A549 (cell line): ENCODE measurements at regions of chr5 and their contacts with region 1.

Region 1: DNA sequence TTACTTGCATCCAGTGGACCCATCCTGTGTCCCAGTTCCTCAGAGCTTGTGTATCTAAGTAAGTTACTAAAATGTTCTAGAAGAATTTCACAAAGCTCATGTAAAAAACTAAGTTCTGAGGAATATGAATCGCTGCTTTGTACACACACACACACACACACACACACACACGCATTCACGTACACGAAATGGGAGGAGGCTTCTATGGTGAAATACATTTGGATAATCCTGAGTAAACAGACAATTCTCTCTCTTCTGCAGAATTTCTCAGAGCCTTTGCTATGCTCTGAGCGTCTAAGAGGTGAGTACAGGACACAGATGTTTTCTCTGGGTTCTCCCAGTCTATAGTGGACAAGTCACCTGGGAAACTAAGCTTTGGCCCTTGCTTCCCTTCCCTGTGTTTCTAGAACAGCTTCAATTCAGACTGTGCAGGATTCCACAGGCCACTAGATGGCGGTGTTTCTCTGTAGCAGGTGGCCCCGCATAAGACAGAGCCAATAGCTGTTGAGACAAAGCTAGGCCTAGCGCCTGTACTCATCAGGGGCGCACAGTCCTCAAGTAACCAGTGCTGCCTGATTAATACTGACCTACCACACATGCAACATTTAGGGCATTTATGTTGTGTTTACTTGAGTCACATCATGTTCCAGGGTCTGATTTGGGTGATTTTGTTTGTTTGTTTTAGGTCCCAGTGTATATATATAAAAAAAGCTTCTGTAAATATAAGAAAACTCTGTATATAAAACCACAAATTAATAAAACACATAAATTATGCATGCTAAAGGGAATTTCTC is 114.8 kb downstream of the LIFR start:
- DNase-seq: peak; percentile 82 to 92
- ATAC-seq: peak; percentile 99 to 100
- H3K4me3 ChIP-seq: no peak overlapping the region
- H3K27ac ChIP-seq: 0 out of 6 replicates have a peak overlapping the region, but pooled peaks of 1 of the 2 experiments have one; percentile 43
- H3K4me1 ChIP-seq: peaks cover 3% of the 10 kb centered on the region; the same call in 1 of the 3 replicates
- CTCF ChIP-seq: peak; percentile 97
- EP300 ChIP-seq: no peak
- POLR2A ChIP-seq: no peak
- RAD21 ChIP-seq: peak; percentile 99 to 100

Region 2: GRCh38 chr5:38341056-38341455 is 100.6 kb before region 1 on chr5:
- CTCF ChIA-PET with region 1: no interaction called
- POLR2A ChIA-PET with region 1: no interaction called
- DNase-seq: no peak
- ATAC-seq: no peak
- H3K4me3 ChIP-seq: no peak overlapping the region
- H3K27ac ChIP-seq: no peak overlapping the region
- H3K4me1 ChIP-seq: no peaks in the 10 kb centered on the region
- CTCF ChIP-seq: no peak
- EP300 ChIP-seq: no peak
- POLR2A ChIP-seq: no peak
- RAD21 ChIP-seq: no peak

Region 3: DNA sequence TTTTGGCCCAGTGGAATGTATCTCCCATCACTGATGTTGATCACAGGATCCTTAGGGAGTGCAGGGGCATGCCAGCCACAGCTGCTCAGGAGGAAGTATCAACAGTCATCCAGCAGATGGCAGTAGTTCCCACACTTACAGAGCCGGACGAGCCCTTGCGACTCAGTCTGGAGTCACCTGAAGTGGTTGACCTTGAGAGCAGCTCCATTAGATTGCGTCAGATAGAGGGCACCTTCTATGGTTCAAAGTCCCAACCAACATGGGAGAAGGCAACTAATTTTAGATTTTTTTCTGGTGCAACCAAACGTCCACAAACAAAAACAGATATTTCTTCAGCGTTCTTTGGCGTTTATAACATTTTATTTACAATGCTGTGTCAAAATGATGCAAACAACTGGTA is 58.8 kb before region 1 on chr5:
- CTCF ChIA-PET with region 1: interaction called, 20 read pairs
- POLR2A ChIA-PET with region 1: no interaction called
- DNase-seq: peak; percentile 72 to 76
- ATAC-seq: peak; percentile 96 to 99
- H3K4me3 ChIP-seq: no peak overlapping the region
- H3K27ac ChIP-seq: no peak overlapping the region
- H3K4me1 ChIP-seq: no peaks in the 10 kb centered on the region
- CTCF ChIP-seq: peak; percentile 73
- EP300 ChIP-seq: no peak
- POLR2A ChIP-seq: no peak
- RAD21 ChIP-seq: peak; percentile 73 to 77

Region 4: GRCh38 chr5:38463634-38464521 is 22.2 kb after region 1 on chr5:
- CTCF ChIA-PET with region 1: interaction called, 74 read pairs
- POLR2A ChIA-PET with region 1: no interaction called
- DNase-seq: peak; percentile 57 to 82
- ATAC-seq: peak; percentile 79 to 87
- H3K4me3 ChIP-seq: no peak overlapping the region
- H3K27ac ChIP-seq: peak overlapping the region; percentile 73 to 85
- H3K4me1 ChIP-seq: peaks cover 61% of the 10 kb centered on the region
- CTCF ChIP-seq: no peak
- EP300 ChIP-seq: peak; percentile 61 to 83; a peak in 3 of 5 replicates
- POLR2A ChIP-seq: no peak
- RAD21 ChIP-seq: peak in 1 of 2 experiments; percentile 5; a peak in 1 of 5 replicates

Region 5: GRCh38 chr5:38551030-38552017 is 109.7 kb after region 1 on chr5:
- CTCF ChIA-PET with region 1: interaction called, 67 read pairs
- POLR2A ChIA-PET with region 1: interaction called, 4 read pairs
- DNase-seq: peak; percentile 38 to 65
- ATAC-seq: peak; percentile 51 to 85; a peak in 3 of 6 replicates
- H3K4me3 ChIP-seq: no peak overlapping the region
- H3K27ac ChIP-seq: no peak overlapping the region
- H3K4me1 ChIP-seq: peaks cover 19% of the 10 kb centered on the region; the same call in 2 of the 3 replicates
- CTCF ChIP-seq: peak; percentile 70
- EP300 ChIP-seq: no peak
- POLR2A ChIP-seq: no peak
- RAD21 ChIP-seq: peak; percentile 63 to 69

Region 6: GRCh38 chr5:38666668-38667498 is 225.2 kb after region 1 on chr5:
- CTCF ChIA-PET with region 1: interaction called, 27 read pairs
- POLR2A ChIA-PET with region 1: no interaction called
- DNase-seq: peak; percentile 43 to 46
- ATAC-seq: peak; percentile 66 to 94; a peak in 4 of 6 replicates
- H3K4me3 ChIP-seq: no peak overlapping the region
- H3K27ac ChIP-seq: peak overlapping the region in 1 of 2 experiments; percentile 53; a peak in 1 of 6 replicates
- H3K4me1 ChIP-seq: peaks cover 13% of the 10 kb centered on the region
- CTCF ChIP-seq: peak; percentile 48
- EP300 ChIP-seq: no peak
- POLR2A ChIP-seq: no peak
- RAD21 ChIP-seq: peak; percentile 53 to 81; a peak in 4 of 5 replicates

Region 7: DNA sequence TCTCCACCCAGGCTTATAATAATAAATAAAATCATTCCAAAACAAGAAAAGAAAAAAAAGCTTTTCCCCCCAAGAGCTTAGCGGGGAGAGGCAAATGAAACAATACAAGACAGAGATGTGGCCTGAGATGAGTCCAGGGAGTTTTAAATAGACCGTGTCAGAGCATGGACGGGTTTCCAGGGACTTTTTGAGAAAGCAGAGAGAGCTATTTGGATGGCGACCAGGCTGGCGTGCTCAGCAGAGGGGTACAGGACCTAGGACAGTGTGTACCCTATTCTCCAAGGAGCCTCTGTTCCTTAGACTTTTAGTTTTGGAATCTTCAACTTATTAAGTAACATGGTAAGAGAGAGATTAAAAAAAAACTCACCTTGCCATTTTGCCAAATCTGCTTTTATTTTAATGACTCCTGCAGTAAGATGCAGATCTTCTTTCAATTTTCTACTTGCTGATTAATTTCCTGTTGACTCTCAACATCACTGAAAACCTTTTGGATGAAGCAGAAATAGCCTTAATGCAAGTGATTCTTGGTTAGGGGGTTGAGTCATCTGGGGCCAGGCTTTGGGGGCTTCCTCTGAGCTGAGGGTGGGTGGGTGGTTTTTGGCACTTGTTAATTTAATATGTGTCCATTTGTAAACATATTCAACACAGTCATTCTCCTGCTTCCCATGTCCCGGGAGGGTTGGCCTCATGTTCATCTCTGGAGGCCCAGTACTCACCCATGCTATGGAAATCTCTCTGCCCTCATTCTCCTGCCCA is 354.5 kb after region 1 on chr5:
- CTCF ChIA-PET with region 1: interaction called, 25 read pairs
- POLR2A ChIA-PET with region 1: no interaction called
- DNase-seq: no peak
- ATAC-seq: no peak
- H3K4me3 ChIP-seq: no peak overlapping the region
- H3K27ac ChIP-seq: no peak overlapping the region
- H3K4me1 ChIP-seq: no peaks in the 10 kb centered on the region
- CTCF ChIP-seq: no peak
- EP300 ChIP-seq: no peak
- POLR2A ChIP-seq: no peak
- RAD21 ChIP-seq: no peak

Region 8: DNA sequence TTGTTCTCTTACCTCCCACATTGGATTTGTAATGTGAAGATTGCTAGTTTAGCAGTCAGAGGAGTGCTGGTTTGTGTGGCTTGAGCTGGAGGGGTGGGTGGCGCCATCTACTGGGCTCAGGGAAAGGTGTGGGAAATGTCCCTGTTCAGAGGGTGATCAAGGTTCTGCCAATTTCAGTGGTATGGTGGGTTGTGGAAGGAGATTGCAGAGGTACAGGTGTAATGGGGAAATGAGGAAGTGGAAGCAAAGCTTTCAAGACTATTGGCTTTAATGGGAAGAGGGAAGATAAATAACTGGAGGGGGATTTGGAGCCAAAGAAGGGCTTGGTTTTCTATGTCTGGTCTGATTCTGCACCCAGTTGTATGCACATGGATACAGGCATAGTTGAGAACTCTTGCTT is 480.5 kb after region 1 on chr5:
- CTCF ChIA-PET with region 1: interaction called, 19 read pairs
- POLR2A ChIA-PET with region 1: no interaction called
- DNase-seq: peak; percentile 68 to 73
- ATAC-seq: peak; percentile 88 to 95
- H3K4me3 ChIP-seq: no peak overlapping the region
- H3K27ac ChIP-seq: no peak overlapping the region
- H3K4me1 ChIP-seq: no peaks in the 10 kb centered on the region
- CTCF ChIP-seq: peak; percentile 84
- EP300 ChIP-seq: no peak
- POLR2A ChIP-seq: no peak
- RAD21 ChIP-seq: peak; percentile 85 to 93